ENCODE measurements at regions of chr3 and their contacts with region 1.

Region 1: GRCh38 chr3:122679085-122679881 is 1.4 kb upstream of the PARP14 start:
- DNase-seq: peak; percentile 14
- H3K4me3 ChIP-seq: peak overlapping the region; percentile 38
- CTCF ChIP-seq: peak; percentile 78

Region 2: GRCh38 chr3:122356415-122356814 is 322.9 kb before region 1 on chr3:
- CTCF ChIA-PET with region 1: no interaction called
- POLR2A ChIA-PET with region 1: no interaction called
- DNase-seq: no peak
- H3K4me3 ChIP-seq: no peak overlapping the region
- CTCF ChIP-seq: peak; percentile 22

Region 3: DNA sequence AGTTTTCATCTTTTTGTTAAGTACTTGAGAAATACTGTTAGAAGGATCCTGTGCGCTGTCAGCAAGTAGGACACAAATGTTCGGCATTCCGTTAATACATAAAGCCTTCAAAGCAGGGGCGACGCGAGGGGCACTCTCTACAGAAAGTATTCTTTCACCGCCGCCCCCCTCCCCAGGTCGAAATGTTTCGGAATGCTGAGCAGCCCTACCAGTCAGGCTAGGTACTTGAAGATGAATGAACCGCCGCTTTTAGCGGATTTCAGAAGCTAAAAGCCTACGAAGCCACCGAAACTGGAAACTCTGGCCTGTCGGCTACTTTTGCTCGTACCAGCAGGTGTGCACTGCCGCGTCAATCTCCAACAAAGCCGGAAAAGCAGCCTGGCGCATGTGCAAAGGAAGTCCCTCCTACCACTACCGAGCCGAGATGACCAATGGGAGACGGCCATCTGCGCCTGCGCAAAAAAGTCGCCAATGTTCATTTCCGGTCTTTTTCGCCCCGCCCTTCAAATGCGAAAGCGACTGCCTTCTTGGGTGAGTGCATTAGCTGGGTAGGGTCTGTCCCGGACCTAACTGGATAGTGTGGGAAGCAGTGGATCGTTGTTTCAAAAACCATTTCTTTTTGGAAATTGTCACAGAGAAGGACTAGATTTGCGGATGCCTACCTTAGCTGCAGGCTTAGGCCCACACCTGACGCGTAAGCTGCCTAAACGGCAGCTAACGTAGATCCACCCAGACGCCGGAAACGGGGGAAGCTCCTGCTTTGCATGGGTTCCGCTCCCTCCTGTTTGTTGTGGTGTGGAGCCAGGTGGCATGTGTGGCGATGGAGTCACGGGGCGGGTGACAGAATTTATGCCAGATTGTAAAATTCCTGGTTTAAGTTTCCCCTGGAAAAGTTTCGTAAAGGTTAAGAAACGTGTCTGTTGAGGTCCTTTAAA is 263.3 kb before region 1 on chr3 and contains the start of gene WDR5B:
- CTCF ChIA-PET with region 1: interaction called, 13 read pairs
- POLR2A ChIA-PET with region 1: no interaction called
- DNase-seq: peak; percentile 86
- H3K4me3 ChIP-seq: peak within 1 kb of the TSS; percentile 87
- CTCF ChIP-seq: no peak

Region 4: GRCh38 chr3:122468896-122469533 is 210.3 kb before region 1 on chr3:
- CTCF ChIA-PET with region 1: interaction called, 13 read pairs
- POLR2A ChIA-PET with region 1: no interaction called
- DNase-seq: no peak
- H3K4me3 ChIP-seq: no peak overlapping the region
- CTCF ChIP-seq: no peak

Region 5: GRCh38 chr3:122668930-122669730 is 10.2 kb before region 1 on chr3:
- CTCF ChIA-PET with region 1: interaction called, 24 read pairs
- POLR2A ChIA-PET with region 1: no interaction called
- DNase-seq: peak; percentile 31
- H3K4me3 ChIP-seq: no peak overlapping the region
- CTCF ChIP-seq: no peak

Region 6: DNA sequence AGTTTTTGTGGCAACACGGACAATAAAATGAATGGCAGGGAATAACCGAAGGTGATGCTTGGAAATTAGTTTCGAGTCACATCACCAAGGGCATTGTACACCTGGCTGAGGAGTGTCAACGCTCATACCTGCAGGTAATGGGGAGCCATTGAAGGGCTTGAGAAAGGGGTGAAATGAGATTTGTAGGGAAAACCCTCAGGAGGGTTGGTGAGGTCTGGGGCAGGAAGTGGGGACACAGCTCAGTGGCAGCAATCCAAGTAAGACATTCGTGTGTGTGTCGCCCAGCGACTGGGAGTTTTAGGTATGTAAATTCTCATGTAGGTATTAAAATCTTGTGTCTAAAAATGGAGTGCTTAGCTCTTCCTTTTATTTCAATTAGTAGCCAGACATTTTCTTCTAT is 15.7 kb after region 1 on chr3:
- CTCF ChIA-PET with region 1: interaction called, 13 read pairs
- POLR2A ChIA-PET with region 1: no interaction called
- DNase-seq: no peak
- H3K4me3 ChIP-seq: no peak overlapping the region
- CTCF ChIP-seq: no peak

Region 7: DNA sequence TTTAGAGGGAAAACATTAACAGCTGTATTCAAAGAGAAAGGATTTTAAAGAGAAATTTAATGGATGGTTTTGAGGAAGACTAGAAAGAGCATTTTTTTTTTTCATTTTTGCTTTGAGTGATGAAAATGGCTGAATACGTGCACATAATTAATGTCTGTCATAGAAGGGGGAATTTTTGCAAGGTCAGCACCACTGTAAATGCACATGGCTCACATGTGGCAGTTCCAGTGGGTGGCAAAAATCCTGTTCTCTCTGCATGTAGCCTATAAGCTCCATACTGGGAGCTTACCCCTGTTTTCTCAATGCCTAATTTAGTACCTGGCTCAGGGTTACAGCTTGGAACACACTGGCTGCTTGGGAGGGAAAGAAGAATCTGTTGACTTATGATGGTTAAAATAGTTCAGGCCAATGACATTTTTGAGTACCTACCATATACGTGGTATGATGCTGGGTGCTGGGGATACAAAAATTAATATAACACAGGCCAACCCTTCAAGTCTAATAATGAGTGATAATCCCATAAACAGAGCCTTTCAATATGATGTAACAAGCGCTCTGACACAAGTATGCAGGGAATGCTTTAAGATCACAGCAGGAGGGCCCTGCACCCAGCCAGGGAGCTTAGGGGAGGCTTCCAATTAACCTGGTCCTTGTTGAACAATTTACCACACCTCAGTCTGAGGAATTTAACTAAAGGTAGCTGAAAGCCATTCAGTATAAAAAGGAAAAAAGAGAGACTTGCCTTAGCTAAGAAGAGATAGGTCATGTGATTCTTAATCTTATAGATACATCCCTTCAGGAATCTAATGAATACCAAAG is 81.4 kb after region 1 on chr3:
- CTCF ChIA-PET with region 1: no interaction called
- POLR2A ChIA-PET with region 1: no interaction called
- DNase-seq: no peak
- H3K4me3 ChIP-seq: no peak overlapping the region
- CTCF ChIP-seq: no peak

Measured in AG04449 (cell line).